ENCODE measurements at regions of chr3 and their contacts with region 1.

Region 1: GRCh38 chr3:141561426-141562034 is 74.7 kb downstream of the RASA2 start:
- DNase-seq: peak in 1 of 2 donors; percentile 5
- H3K4me3 ChIP-seq: no peak overlapping the region
- H3K27ac ChIP-seq: no peak overlapping the region
- H3K4me1 ChIP-seq: no peaks in the 10 kb centered on the region
- H3K27me3 ChIP-seq: no peaks in the 10 kb centered on the region
- CTCF ChIP-seq: peak; percentile 77 to 99 (median 92)
- POLR2A ChIP-seq: no peak

Region 2: GRCh38 chr3:141311496-141312353 is 249.8 kb before region 1 on chr3:
- intact Hi-C with region 1: loop called (anchors 5 kb)
- DNase-seq: peak; percentile 98 to 99
- H3K4me3 ChIP-seq: peak overlapping the region; percentile 2 to 63 (median 60)
- H3K27ac ChIP-seq: peak overlapping the region; percentile 10 to 74 (median 71)
- H3K4me1 ChIP-seq: peaks cover 10 to 12% of the 10 kb centered on the region in 2 donors
- H3K27me3 ChIP-seq: no peaks in the 10 kb centered on the region
- CTCF ChIP-seq: peak in 5 of 6 experiments; percentile 45 to 78 (median 63)
- POLR2A ChIP-seq: peak; percentile 21 to 72

Region 3: DNA sequence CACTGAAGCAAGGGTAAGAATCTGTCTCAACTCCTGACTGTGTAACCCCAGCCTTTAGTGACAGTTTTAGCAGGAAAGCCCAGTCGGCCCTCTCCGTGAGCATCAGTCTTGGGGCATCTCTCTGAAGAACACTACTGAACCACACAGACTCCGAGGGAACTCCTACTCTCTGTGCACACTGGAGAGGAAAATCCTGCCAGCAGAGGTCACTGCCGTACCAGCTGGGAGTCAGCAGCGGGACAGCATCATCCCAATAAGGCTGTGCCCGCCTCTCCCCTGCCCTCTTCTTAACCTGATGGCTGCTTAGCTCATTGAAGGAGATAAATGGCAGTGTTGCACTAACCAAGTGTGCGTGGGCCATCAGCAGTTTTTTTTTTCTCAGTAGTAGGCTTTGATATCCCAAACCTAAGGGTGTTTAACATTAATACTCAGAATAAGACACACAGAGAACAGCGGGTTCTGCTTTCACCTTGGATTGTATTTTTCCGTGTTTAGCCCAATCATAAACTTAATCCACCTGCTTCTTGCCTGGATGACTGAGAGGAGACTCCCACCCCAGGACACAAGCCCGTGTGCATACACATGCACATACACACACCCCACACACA is 101.3 kb before region 1 on chr3:
- intact Hi-C with region 1: loop called (anchors 2 kb)
- DNase-seq: peak; percentile 85 to 89
- H3K4me3 ChIP-seq: no peak overlapping the region
- H3K27ac ChIP-seq: no peak overlapping the region
- H3K4me1 ChIP-seq: no peaks in the 10 kb centered on the region
- H3K27me3 ChIP-seq: no peaks in the 10 kb centered on the region
- CTCF ChIP-seq: peak; percentile 53 to 86 (median 76)
- POLR2A ChIP-seq: no peak

Region 4: GRCh38 chr3:141482250-141483017 is 79.1 kb before region 1 on chr3:
- intact Hi-C with region 1: loop called (anchors 5 kb)
- DNase-seq: no peak
- H3K4me3 ChIP-seq: no peak overlapping the region
- H3K27ac ChIP-seq: no peak overlapping the region
- H3K4me1 ChIP-seq: peaks cover 0 to 6% of the 10 kb centered on the region in 2 donors
- H3K27me3 ChIP-seq: no peaks in the 10 kb centered on the region
- CTCF ChIP-seq: no peak
- POLR2A ChIP-seq: no peak

Region 5: DNA sequence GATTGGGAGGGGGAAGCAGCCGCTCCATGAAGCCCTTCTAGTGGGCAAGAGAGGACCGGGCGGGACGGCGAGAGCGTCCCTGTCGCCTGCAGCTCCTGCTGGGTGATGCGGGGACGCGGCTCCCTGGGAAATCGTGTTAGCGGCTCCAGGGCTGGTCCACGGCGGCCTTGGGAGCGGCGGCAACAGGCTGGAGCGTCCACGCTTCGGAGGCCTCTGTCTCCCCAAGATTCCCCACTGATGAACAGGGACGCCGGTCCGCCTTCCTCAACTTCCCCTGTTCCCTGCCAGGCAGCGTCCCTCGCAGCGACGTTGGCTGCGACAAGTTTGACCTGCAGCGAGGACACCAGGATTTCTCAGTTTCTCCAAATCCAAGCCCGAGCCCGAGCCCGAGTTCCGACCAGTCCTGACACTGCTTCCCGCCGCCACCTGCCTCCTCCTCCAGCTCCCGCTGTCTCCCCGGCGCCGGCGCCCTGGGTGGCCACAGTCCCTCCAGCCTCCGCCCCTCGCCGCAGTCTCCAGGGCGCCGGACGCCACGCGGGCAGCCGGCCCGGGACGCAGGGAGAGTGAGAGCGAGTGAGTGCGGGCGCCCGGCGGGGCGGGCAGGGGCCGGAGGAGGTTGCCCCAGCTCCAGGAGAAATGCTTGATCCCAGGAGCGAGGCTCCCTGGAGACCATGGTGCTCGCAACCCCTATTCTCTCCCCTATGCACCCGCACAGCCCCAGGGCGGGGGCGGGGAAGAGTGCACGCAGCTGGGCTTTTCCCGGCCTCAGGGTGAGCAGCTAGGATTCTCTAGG is 98.5 kb after region 1 on chr3:
- intact Hi-C with region 1: no loop called
- DNase-seq: peak; percentile 78 to 83
- H3K4me3 ChIP-seq: peak overlapping the region; percentile 23 to 49 (median 30)
- H3K27ac ChIP-seq: peak overlapping the region in 2 of 3 donors; percentile 12 to 35
- H3K4me1 ChIP-seq: peaks cover 16 to 22% of the 10 kb centered on the region in 2 donors
- H3K27me3 ChIP-seq: no peaks in the 10 kb centered on the region
- CTCF ChIP-seq: no peak
- POLR2A ChIP-seq: peak in 1 of 2 donors; percentile 26